ENCODE measurements at regions of chr19 and their contacts with region 1.

Region 1: DNA sequence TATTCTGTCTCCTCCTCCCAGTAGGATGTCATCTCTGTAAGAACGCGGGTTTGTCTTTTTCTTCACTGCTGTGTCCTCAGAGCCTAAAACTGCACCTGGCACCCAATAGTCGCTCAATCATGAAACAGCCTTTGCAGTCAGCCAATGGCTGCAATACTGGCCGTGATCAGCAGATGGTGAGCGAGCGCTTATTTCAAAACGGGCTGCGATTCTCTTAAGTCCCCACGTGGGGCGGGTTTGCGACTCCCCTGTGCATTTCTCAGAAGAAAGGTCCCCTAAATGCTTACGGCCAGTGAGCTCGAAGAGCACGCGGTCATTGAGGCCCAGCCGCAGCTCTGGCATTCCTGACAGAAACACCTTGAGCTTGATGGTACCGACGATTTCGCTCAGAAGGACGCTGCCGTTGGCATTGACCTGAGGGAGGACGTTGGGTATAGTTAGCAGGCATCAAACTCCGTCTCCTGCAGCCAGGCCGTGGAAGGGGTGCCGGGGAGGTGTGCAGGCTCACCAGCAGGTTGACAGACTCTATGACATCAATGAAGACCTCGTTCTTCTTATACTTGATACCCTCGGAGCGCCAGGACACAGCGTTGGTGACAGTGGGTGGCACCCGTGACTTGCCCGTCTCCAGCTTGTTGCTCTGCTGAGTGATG is 6.0 kb downstream of the AP1M2 start:
- DNase-seq: peak; percentile 81 to 93 (median 92)
- ATAC-seq: peak; percentile 100
- H3K4me3 ChIP-seq: no peak overlapping the region
- H3K4me3 Mint-ChIP-seq: no peak overlapping the region
- H3K27ac ChIP-seq: no peak overlapping the region
- H3K27ac Mint-ChIP-seq: no peak overlapping the region
- H3K4me1 ChIP-seq: peaks cover 4% of the 10 kb centered on the region
- H3K4me1 Mint-ChIP-seq: peaks cover 11% of the 10 kb centered on the region
- H3K27me3 ChIP-seq: no peaks in the 10 kb centered on the region
- H3K27me3 Mint-ChIP-seq: no peaks in the 10 kb centered on the region
- CTCF ChIP-seq: peak; percentile 99

Region 2: GRCh38 chr19:10510301-10510802 is 70.8 kb before region 1 on chr19:
- CTCF ChIA-PET with region 1: interaction called, 11 read pairs
- POLR2A ChIA-PET with region 1: no interaction called
- intact Hi-C with region 1: no loop called
- DNase-seq: peak; percentile 46 to 79 (median 67)
- ATAC-seq: no peak
- H3K4me3 ChIP-seq: no peak overlapping the region
- H3K4me3 Mint-ChIP-seq: no peak overlapping the region
- H3K27ac ChIP-seq: peak overlapping the region in 1 of 2 experiments; percentile 32
- H3K27ac Mint-ChIP-seq: no peak overlapping the region
- H3K4me1 ChIP-seq: peaks cover 30% of the 10 kb centered on the region
- H3K4me1 Mint-ChIP-seq: peaks cover 33% of the 10 kb centered on the region
- H3K27me3 ChIP-seq: peaks cover 4 to 12% of the 10 kb centered on the region in 2 experiments
- H3K27me3 Mint-ChIP-seq: peaks cover 20% of the 10 kb centered on the region
- CTCF ChIP-seq: peak; percentile 72

Region 3: GRCh38 chr19:10602330-10603083 is 21.4 kb after region 1 on chr19:
- CTCF ChIA-PET with region 1: interaction called, 77 read pairs
- POLR2A ChIA-PET with region 1: interaction called, 10 read pairs
- intact Hi-C with region 1: loop called (anchors 1 to 2 kb)
- DNase-seq: peak; percentile 79 to 94 (median 86)
- ATAC-seq: peak; percentile 82
- H3K4me3 ChIP-seq: peak overlapping the region; percentile 91 to 99
- H3K4me3 Mint-ChIP-seq: peak overlapping the region; percentile 96
- H3K27ac ChIP-seq: peak overlapping the region; percentile 99 to 100
- H3K27ac Mint-ChIP-seq: peak overlapping the region; percentile 99
- H3K4me1 ChIP-seq: peaks cover 38% of the 10 kb centered on the region
- H3K4me1 Mint-ChIP-seq: peaks cover 29% of the 10 kb centered on the region
- H3K27me3 ChIP-seq: no peaks in the 10 kb centered on the region
- H3K27me3 Mint-ChIP-seq: no peaks in the 10 kb centered on the region
- CTCF ChIP-seq: no peak

Region 4: DNA sequence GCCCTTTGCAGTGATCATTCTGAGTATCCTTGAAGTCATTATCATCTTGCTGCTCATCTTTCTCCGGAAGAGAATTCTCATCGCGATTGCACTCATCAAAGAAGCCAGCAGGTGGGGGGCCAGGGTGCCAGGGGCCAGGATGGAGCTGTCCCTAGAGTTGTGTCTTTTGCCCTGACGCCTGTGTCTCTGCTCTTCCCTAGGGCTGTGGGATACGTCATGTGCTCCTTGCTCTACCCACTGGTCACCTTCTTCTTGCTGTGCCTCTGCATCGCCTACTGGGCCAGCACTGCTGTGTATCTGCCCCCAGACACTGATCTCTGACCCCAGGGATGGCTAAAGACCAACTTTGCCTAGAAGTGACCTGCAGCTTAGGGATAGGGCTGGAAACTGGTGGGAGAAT is 53.9 kb after region 1 on chr19:
- CTCF ChIA-PET with region 1: interaction called, 611 read pairs
- POLR2A ChIA-PET with region 1: no interaction called
- intact Hi-C with region 1: no loop called
- DNase-seq: no peak
- ATAC-seq: no peak
- H3K4me3 ChIP-seq: no peak overlapping the region
- H3K4me3 Mint-ChIP-seq: no peak overlapping the region
- H3K27ac ChIP-seq: no peak overlapping the region
- H3K27ac Mint-ChIP-seq: peak overlapping the region; percentile 23
- H3K4me1 ChIP-seq: no peaks in the 10 kb centered on the region
- H3K4me1 Mint-ChIP-seq: peaks cover 12% of the 10 kb centered on the region
- H3K27me3 ChIP-seq: no peaks in the 10 kb centered on the region
- H3K27me3 Mint-ChIP-seq: no peaks in the 10 kb centered on the region
- CTCF ChIP-seq: no peak

Region 5: GRCh38 chr19:10670182-10670581 is 89.1 kb after region 1 on chr19:
- CTCF ChIA-PET with region 1: interaction called, 12 read pairs
- POLR2A ChIA-PET with region 1: no interaction called
- intact Hi-C with region 1: no loop called
- DNase-seq: no peak
- ATAC-seq: no peak
- H3K4me3 ChIP-seq: no peak overlapping the region
- H3K4me3 Mint-ChIP-seq: no peak overlapping the region
- H3K27ac ChIP-seq: no peak overlapping the region
- H3K27ac Mint-ChIP-seq: no peak overlapping the region
- H3K4me1 ChIP-seq: peaks cover 18% of the 10 kb centered on the region
- H3K4me1 Mint-ChIP-seq: peaks cover 45% of the 10 kb centered on the region
- H3K27me3 ChIP-seq: no peaks in the 10 kb centered on the region
- H3K27me3 Mint-ChIP-seq: no peaks in the 10 kb centered on the region
- CTCF ChIP-seq: no peak

Region 6: DNA sequence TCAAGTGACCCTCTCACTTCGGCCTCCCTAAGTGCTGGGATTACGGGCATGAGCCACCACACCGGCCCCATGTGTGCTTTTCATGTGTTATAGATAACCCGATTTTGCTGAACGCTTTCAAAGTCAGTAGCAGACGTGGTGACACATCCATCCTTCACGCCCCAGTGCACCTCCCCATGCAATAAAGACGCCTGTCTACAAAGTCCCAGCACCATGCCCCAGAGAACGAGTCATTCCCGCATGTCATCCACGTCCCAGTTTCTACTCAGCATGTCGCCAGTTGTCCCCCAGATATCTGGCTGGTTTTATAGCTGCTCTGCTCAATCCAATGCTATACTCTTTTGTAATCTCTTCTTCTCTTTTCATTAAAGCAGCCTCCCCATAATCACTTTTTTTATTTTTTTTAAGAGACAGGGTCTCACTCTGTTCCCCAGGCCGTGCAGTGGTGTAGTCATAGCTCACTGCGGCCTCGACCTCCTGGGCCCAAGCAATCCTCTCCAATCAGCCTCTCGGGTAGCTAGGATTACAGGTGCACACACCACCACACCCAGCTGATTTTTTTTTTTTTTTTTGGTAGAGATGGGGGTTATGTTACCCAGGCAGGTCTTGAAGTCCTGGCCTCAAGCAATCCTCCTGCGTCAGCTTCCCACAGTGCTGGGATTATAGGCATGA is 179.3 kb after region 1 on chr19:
- CTCF ChIA-PET with region 1: no interaction called
- POLR2A ChIA-PET with region 1: no interaction called
- intact Hi-C with region 1: no loop called
- DNase-seq: peak in 5 of 9 experiments; percentile 36 to 67 (median 54)
- ATAC-seq: peak; percentile 30
- H3K4me3 ChIP-seq: peak overlapping the region in 1 of 2 experiments; percentile 39
- H3K4me3 Mint-ChIP-seq: peak overlapping the region; percentile 66
- H3K27ac ChIP-seq: peak overlapping the region; percentile 43 to 74
- H3K27ac Mint-ChIP-seq: peak overlapping the region; percentile 95
- H3K4me1 ChIP-seq: peaks cover 81% of the 10 kb centered on the region
- H3K4me1 Mint-ChIP-seq: peaks cover 82% of the 10 kb centered on the region
- H3K27me3 ChIP-seq: no peaks in the 10 kb centered on the region
- H3K27me3 Mint-ChIP-seq: no peaks in the 10 kb centered on the region
- CTCF ChIP-seq: no peak